ENCODE measurements at regions of chr3 and their contacts with region 1.

Region 1: GRCh38 chr3:125165189-125165947 is 47.2 kb downstream of the SLC12A8 start:
- DNase-seq: peak in 1 of 2 donors; percentile 50
- ATAC-seq: peak; percentile 76 to 89 (median 85)
- H3K4me3 ChIP-seq: no peak overlapping the region
- H3K27ac ChIP-seq: no peak overlapping the region
- H3K4me1 ChIP-seq: peaks cover 0 to 44% (median 24%) of the 10 kb centered on the region in 9 donors
- H3K27me3 ChIP-seq: no peaks in the 10 kb centered on the region
- CTCF ChIP-seq: peak; percentile 69 to 85 (median 81)

Region 2: DNA sequence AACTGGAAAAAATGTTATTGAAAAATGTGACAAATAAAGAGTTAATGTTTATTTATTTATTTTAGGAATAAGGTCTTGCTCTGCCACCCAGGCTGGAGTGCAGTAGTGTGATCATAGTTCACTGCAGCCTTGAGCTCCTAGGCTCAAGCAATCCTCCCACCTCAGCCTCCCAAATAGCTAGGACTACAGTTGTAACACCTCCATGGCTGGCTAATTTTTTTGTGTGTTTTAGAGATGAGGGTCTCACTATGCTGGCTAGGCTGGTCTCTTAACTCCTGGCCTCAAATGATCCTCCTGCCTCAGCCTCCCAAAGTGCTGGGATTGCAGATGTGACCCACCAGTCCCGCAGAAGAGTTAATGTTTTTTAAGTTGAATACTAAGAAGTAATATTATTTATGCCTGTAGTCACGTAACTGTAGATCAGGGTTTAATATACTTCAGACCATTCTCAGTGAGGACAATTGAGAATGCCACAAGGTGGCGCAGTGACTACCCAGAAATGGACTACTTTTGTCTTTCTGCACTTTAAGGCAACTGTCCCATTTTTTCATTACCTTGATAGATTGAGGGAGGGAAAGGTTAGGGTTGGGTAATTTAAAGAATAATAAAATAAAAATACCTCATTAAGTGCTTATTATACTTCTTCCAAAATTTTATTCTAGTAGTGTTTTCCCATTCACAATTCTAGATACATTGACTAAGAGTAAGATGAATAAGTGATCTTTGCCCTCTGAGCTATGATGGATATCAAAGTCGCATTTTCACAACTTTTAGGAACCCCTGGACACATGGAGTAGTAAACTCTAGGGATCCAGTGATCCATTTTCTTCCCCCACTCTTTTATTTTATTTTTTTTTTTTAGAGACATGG is 236.8 kb before region 1 on chr3:
- intact Hi-C with region 1: loop called (anchors 1 to 5 kb)
- DNase-seq: peak; percentile 31 to 68
- ATAC-seq: peak in 7 of 8 donors; percentile 42 to 84 (median 68)
- H3K4me3 ChIP-seq: no peak overlapping the region
- H3K27ac ChIP-seq: no peak overlapping the region
- H3K4me1 ChIP-seq: peaks cover 0 to 13% (median 0%) of the 10 kb centered on the region in 9 donors
- H3K27me3 ChIP-seq: no peaks in the 10 kb centered on the region
- CTCF ChIP-seq: peak; percentile 57 to 85 (median 77)

Region 3: GRCh38 chr3:125045965-125046364 is 119.4 kb before region 1 on chr3:
- intact Hi-C with region 1: loop called in 2 of 10 experiments (anchors 5 kb)
- DNase-seq: no peak
- ATAC-seq: no peak
- H3K4me3 ChIP-seq: no peak overlapping the region
- H3K27ac ChIP-seq: peak overlapping the region in 7 of 10 donors; percentile 84 to 99 (median 94)
- H3K4me1 ChIP-seq: peaks cover 68 to 100% (median 97%) of the 10 kb centered on the region in 9 donors
- H3K27me3 ChIP-seq: no peaks in the 10 kb centered on the region
- CTCF ChIP-seq: no peak

Region 4: GRCh38 chr3:125141596-125142419 is 23.6 kb before region 1 on chr3:
- intact Hi-C with region 1: loop called in 1 of 10 experiments (anchors 2 kb)
- DNase-seq: peak; percentile 78 to 82
- ATAC-seq: peak; percentile 76 to 92 (median 87)
- H3K4me3 ChIP-seq: peak overlapping the region in 9 of 10 donors; percentile 21 to 51 (median 47)
- H3K27ac ChIP-seq: peak overlapping the region; percentile 59 to 94 (median 84)
- H3K4me1 ChIP-seq: peaks cover 26 to 80% (median 59%) of the 10 kb centered on the region in 9 donors
- H3K27me3 ChIP-seq: no peaks in the 10 kb centered on the region
- CTCF ChIP-seq: peak in 8 of 9 donors; percentile 23 to 74 (median 58)

Measured in heart right ventricle (tissue), 16 donors.